Caco-2 (cell line): ENCODE measurements at regions of chr2 and their contacts with region 1.

Region 1: GRCh38 chr2:105761931-105762515 is 17.3 kb downstream of the NCK2 start:
- DNase-seq: no peak
- H3K4me3 ChIP-seq: no peak overlapping the region
- H3K4me3 Mint-ChIP-seq: no peak overlapping the region
- H3K27ac Mint-ChIP-seq: peak overlapping the region; percentile 50
- H3K4me1 ChIP-seq: no peaks in the 10 kb centered on the region
- H3K4me1 Mint-ChIP-seq: peaks cover 11% of the 10 kb centered on the region
- H3K27me3 ChIP-seq: no peaks in the 10 kb centered on the region
- H3K27me3 Mint-ChIP-seq: no peaks in the 10 kb centered on the region
- CTCF ChIP-seq: no peak

Region 2: GRCh38 chr2:105576440-105577252 is 185.4 kb before region 1 on chr2:
- CTCF ChIA-PET with region 1: no interaction called
- POLR2A ChIA-PET with region 1: no interaction called
- intact Hi-C with region 1: loop called (anchors 5 kb)
- DNase-seq: peak in 1 of 2 experiments; percentile 45
- H3K4me3 ChIP-seq: no peak overlapping the region
- H3K4me3 Mint-ChIP-seq: peak overlapping the region; percentile 30
- H3K27ac Mint-ChIP-seq: peak overlapping the region; percentile 90
- H3K4me1 ChIP-seq: peaks cover 30% of the 10 kb centered on the region
- H3K4me1 Mint-ChIP-seq: peaks cover 36% of the 10 kb centered on the region
- H3K27me3 ChIP-seq: no peaks in the 10 kb centered on the region
- H3K27me3 Mint-ChIP-seq: no peaks in the 10 kb centered on the region
- CTCF ChIP-seq: peak; percentile 54 to 71

Region 3: GRCh38 chr2:105744091-105744908 is 17.7 kb before region 1 on chr2:
- CTCF ChIA-PET with region 1: no interaction called
- POLR2A ChIA-PET with region 1: no interaction called
- intact Hi-C with region 1: no loop called
- DNase-seq: peak; percentile 58 to 79
- H3K4me3 ChIP-seq: peak overlapping the region; percentile 67
- H3K4me3 Mint-ChIP-seq: peak overlapping the region; percentile 80
- H3K27ac Mint-ChIP-seq: peak overlapping the region; percentile 85
- H3K4me1 ChIP-seq: peaks cover 20% of the 10 kb centered on the region
- H3K4me1 Mint-ChIP-seq: peaks cover 21% of the 10 kb centered on the region
- H3K27me3 ChIP-seq: no peaks in the 10 kb centered on the region
- H3K27me3 Mint-ChIP-seq: no peaks in the 10 kb centered on the region
- CTCF ChIP-seq: no peak